ENCODE measurements at regions of chr17 and their contacts with region 1.

Region 1: DNA sequence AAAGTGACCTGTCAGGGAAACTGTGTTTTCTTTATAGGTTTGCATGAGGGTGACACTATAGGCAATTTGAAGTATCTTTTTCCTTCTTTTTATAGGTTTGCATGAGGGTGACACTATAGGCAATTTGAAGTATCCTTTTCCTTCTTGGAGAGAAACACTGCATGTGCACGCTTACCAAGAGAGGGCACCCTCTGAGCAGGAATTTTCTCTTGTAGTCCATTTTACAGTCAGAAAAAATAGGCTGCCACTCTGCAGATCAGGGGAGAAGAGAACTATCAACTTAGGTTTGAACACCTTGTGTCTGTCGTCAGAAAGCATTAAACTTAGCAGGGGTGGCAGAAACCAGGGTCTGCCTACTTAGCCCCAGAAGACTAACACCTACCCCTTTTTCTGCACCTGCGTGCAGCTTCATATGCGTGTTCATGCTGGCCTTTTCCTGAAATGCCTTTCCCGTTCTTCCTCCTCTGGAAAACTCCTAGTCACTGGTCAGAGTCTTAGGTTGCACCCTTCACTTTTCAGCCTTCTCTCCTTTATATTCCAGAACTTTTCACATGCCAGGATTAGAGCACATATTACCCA is 16.4 kb upstream of the SMIM36 start:
- DNase-seq: peak; percentile 6
- H3K4me3 ChIP-seq: no peak overlapping the region
- H3K27ac ChIP-seq: no peak overlapping the region
- H3K4me1 ChIP-seq: no peaks in the 10 kb centered on the region
- H3K27me3 ChIP-seq: no peaks in the 10 kb centered on the region
- CTCF ChIP-seq: peak; percentile 20 to 67 (median 43)
- POLR2A ChIP-seq: no peak

Region 2: DNA sequence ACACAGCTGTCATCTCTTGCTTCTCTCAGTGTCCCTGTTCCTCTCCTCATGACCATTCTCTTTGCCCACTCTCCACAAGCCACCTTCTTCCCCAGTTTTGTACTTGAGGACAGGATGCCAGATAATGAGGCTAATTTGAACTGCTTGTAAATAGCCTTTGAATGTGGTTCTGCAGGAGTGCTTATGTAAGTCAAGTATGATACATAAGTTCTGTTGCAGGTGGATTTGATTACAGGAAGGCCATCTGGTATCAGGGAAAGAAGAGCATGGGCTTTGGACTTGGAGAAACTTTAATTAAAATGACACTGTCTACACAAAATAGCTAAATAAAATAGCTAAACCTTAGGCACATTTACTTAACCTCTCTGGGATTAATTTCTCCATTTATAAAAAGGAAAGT is 383.1 kb before region 1 on chr17:
- intact Hi-C with region 1: no loop called
- DNase-seq: no peak
- H3K4me3 ChIP-seq: no peak overlapping the region
- H3K27ac ChIP-seq: no peak overlapping the region
- H3K4me1 ChIP-seq: no peaks in the 10 kb centered on the region
- H3K27me3 ChIP-seq: no peaks in the 10 kb centered on the region
- CTCF ChIP-seq: no peak
- POLR2A ChIP-seq: no peak

Region 3: GRCh38 chr17:55641676-55642081 is 114.0 kb after region 1 on chr17:
- intact Hi-C with region 1: loop called (anchors 5 kb)
- DNase-seq: peak; percentile 41
- H3K4me3 ChIP-seq: no peak overlapping the region
- H3K27ac ChIP-seq: no peak overlapping the region
- H3K4me1 ChIP-seq: no peaks in the 10 kb centered on the region
- H3K27me3 ChIP-seq: no peaks in the 10 kb centered on the region
- CTCF ChIP-seq: peak in 3 of 4 experiments; percentile 34 to 45 (median 40)
- POLR2A ChIP-seq: no peak

Region 4: DNA sequence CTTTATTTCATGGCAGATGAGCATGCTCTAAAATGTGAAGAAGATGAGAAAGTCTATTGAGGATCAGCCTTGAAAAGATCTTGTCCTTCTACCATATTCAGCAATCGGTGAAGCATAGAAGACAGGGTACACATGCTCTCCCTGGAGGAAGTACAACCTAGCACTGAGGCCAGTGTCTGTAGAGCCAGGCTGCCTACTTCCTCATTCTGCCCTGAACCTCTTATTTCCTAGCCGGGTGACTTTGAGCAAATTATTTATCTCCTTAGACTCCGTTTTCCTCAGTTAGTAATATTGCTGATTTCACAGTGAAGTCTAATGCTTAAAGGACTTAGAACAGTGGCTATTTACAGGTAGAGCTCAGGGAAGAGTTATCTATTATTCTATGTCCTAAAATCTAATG is 136.7 kb after region 1 on chr17:
- intact Hi-C with region 1: no loop called
- DNase-seq: no peak
- H3K4me3 ChIP-seq: no peak overlapping the region
- H3K27ac ChIP-seq: no peak overlapping the region
- H3K4me1 ChIP-seq: no peaks in the 10 kb centered on the region
- H3K27me3 ChIP-seq: no peaks in the 10 kb centered on the region
- CTCF ChIP-seq: no peak
- POLR2A ChIP-seq: no peak

Region 5: GRCh38 chr17:55717898-55718735 is 190.5 kb after region 1 on chr17:
- intact Hi-C with region 1: loop called (anchors 2 kb)
- DNase-seq: peak; percentile 70
- H3K4me3 ChIP-seq: no peak overlapping the region
- H3K27ac ChIP-seq: no peak overlapping the region
- H3K4me1 ChIP-seq: no peaks in the 10 kb centered on the region
- H3K27me3 ChIP-seq: peaks cover 2% of the 10 kb centered on the region
- CTCF ChIP-seq: peak; percentile 56 to 74 (median 68)
- POLR2A ChIP-seq: no peak

Region 6: DNA sequence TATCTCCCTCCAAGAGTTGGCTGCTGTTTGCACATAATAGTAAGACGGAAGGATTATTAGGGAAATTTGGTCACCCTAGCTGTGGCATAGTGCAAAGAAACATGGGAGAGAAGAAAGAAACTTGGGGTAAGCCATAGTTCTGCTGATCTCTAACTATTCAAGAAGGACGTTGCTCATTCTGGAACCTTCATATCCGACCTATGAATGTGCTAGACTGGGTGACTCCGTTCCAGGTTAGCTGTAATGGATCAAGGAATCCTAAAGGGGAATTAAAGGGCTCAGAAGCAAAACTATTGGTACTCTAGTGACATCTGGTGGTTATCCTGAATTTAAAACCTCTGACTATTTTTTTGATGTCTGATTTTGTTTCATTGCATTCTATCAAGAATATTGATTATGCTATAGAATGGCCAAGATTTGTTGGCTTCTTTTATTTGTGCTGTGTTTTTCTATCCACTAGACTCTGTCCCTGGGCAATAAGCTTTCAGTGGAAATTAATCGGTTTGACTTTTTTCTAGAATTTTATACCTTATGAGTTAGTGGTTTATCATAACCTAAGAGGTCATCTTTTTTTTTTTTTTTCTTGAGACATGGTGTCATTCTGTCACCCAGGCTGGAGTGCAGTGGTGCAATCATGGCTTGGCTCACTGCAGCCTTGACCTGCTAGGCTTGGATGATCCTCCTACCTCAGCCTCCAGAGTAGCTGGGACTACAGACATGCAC is 242.7 kb after region 1 on chr17:
- intact Hi-C with region 1: loop called (anchors 2 kb)
- DNase-seq: no peak
- H3K4me3 ChIP-seq: no peak overlapping the region
- H3K27ac ChIP-seq: no peak overlapping the region
- H3K4me1 ChIP-seq: no peaks in the 10 kb centered on the region
- H3K27me3 ChIP-seq: no peaks in the 10 kb centered on the region
- CTCF ChIP-seq: peak in 3 of 4 experiments; percentile 65 to 76 (median 72)
- POLR2A ChIP-seq: no peak